Body of pancreas (tissue), 4 donors: ENCODE measurements at regions of chr9 and their contacts with region 1.

Region 1: GRCh38 chr9:92176068-92176799 is 61.0 kb upstream of the SPTLC1 start:
- DNase-seq: no peak
- ATAC-seq: no peak
- H3K4me3 ChIP-seq: no peak overlapping the region
- H3K27ac ChIP-seq: no peak overlapping the region
- H3K4me1 ChIP-seq: no peaks in the 10 kb centered on the region
- H3K27me3 ChIP-seq: no peaks in the 10 kb centered on the region
- CTCF ChIP-seq: no peak
- POLR2A ChIP-seq: no peak

Region 2: GRCh38 chr9:91834740-91835139 is 341.5 kb before region 1 on chr9:
- intact Hi-C with region 1: no loop called
- DNase-seq: no peak
- ATAC-seq: no peak
- H3K4me3 ChIP-seq: no peak overlapping the region
- H3K27ac ChIP-seq: no peak overlapping the region
- H3K4me1 ChIP-seq: peaks cover 3% of the 10 kb centered on the region
- H3K27me3 ChIP-seq: no peaks in the 10 kb centered on the region
- CTCF ChIP-seq: no peak
- POLR2A ChIP-seq: no peak

Region 3: DNA sequence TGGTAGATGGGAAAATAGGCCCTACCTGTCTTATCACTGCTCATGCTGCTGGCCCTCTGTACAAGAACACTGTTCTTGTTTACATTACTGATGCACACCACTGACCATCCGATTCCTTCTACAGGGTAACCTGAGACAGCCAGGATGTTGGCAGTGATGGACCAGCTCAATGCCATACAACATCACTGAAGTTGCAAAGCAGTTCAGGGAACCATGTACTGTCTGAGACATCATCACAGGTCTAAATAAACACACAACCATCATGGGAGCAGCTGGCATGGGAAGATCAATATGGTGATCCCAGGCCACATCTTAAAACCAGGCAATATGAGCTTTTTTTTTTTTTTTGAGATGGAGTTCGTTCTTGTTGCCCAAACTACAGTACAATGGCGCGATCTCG is 58.3 kb after region 1 on chr9:
- intact Hi-C with region 1: loop called (anchors 10 kb)
- DNase-seq: no peak
- ATAC-seq: no peak
- H3K4me3 ChIP-seq: no peak overlapping the region
- H3K27ac ChIP-seq: no peak overlapping the region
- H3K4me1 ChIP-seq: no peaks in the 10 kb centered on the region
- H3K27me3 ChIP-seq: no peaks in the 10 kb centered on the region
- CTCF ChIP-seq: no peak
- POLR2A ChIP-seq: no peak